Activated CD8-positive, alpha-beta memory T cell treated with anti-CD3 and anti-CD28 coated beads, Interleukin-2, amount 10 ng/mL, durations not matched to agents 7 days and 5 days (primary cell): ENCODE measurements at regions of chr19 and their contacts with region 1.

Region 1: DNA sequence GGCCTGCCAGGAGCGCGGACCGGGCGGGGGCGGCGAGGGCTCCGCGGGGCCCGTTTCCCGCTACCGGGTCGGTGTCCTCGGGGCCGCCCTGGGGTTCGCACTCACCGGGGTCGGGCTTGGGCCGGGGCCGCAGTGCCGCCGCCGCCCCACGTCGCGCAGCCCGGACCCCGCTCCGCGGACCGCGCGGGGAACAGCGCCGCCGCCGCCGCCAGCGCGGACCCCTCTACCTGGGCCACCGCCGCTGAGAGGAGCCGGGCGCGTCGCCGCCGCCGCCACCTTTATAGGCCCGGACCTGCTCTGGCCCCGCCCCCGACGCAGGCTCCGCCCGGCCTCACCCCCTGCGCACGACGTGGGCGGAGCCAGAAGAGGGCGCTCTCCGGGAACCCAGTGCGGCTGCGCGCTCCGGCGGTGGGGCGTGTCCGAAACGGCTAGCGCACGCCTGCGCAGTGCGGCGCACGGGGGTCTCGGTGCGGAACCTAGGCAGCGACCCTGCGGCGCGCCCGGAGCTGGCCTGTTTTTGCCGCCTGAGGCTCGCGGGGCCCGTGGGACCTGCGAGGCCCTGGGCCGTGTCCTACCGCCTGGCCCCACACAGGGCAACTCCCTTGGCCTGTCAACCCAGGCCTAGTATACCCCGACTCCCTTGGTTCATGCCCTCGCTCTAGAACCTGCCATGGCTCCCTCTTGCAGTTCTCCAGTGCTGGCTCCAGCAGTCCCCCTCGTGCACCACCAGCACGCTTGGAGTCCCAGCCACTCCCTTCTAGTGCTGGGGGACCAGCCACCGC is at the start of gene MKNK2:
- DNase-seq: peak; percentile 95
- ATAC-seq: peak; percentile 77
- H3K4me3 Mint-ChIP-seq: peak within 1 kb of the TSS; percentile 86
- H3K27ac Mint-ChIP-seq: peak within 1 kb of the TSS; percentile 94
- H3K4me1 Mint-ChIP-seq: peaks cover 49% of the 10 kb centered on the region
- H3K27me3 Mint-ChIP-seq: no peaks in the 10 kb centered on the region
- total RNA-seq, gene MKNK2: 196 to 201 TPM

Region 2: DNA sequence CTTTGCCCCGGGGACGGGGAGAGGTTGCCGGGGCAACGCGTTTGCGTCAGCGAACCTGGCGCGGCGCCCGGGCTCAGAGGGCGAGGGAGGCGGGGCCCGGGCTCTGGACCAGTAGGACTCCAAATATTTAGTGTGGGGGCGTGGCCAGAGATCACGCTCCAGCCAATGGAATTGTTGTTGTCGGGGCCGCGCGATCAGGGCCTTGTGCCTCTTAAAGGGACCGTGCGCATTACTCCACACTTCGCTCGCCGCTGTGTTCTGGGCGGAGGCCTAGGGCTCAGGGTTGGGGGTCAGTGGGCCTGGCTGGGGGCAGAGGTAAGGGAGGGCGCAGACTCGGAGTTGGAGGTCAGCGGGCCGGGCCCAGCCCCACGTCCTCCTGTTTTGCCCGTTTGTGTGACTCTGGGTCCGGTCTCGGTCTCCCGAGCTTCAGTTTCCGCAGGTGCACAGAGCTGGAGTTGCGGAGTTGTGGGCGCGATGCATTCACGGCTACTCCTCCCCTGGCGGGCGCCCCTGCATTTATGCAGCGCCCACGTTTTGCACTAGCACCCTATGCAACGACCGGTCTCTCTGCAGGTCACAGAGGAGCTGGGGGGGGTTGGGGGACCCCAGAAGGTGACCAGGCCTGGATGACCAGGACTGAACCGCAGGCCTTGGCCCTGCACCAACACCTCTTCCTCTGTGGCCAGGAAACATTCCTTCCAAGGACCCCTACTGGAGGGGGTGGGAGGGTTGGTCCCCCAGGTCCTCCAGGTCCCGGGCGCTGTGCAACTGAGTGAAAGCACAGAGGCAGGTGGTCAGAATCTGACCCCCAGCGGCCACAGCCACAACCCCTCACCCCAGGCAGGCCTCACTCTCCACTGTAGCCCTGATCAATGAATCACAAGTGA is 10.6 kb after region 1 on chr19:
- CTCF ChIA-PET with region 1: interaction called, 19 read pairs
- DNase-seq: peak; percentile 100
- ATAC-seq: peak; percentile 94
- H3K4me3 Mint-ChIP-seq: peak overlapping the region; percentile 84
- H3K27ac Mint-ChIP-seq: peak overlapping the region; percentile 87
- H3K4me1 Mint-ChIP-seq: peaks cover 32% of the 10 kb centered on the region
- H3K27me3 Mint-ChIP-seq: no peaks in the 10 kb centered on the region

Region 3: DNA sequence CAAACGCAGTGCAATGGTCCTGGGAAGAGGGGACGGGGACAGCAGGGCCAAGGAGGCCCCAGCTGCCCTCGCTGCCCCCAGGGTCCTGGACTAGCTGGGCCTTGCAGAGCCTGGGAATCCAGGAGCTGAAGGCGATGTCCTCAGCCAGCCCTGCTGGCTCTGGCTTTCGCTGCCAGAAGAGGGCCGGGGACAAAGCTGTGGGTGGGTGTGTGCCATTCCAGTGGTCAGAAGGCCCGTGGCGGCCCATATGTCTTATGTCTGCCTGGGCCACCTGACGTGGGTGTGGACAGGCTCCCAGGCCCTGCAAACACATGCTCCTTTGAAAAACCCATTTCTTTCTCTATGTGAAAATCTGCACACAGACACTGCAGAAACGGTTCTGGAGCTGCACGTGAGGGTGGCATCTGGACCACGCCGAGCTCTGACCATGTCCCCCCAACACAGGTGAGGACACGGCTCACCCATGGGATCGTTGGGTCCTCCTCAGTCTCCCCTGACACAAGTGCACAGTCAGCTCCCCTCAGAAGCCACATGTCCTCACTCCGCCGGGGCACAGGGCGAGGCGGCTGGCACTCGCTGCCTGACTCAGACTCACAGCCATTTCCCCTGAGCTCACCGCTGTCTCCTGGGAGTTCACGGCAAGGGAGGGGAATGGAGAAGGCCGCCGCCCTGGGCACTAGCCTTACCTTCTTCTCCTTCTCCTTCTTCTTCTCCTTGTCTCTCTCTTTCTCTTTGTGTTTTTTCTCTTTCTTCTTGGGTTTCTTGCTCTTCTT is 62.4 kb after region 1 on chr19:
- CTCF ChIA-PET with region 1: no interaction called
- DNase-seq: no peak
- ATAC-seq: no peak
- H3K4me3 Mint-ChIP-seq: no peak overlapping the region
- H3K27ac Mint-ChIP-seq: no peak overlapping the region
- H3K4me1 Mint-ChIP-seq: peaks cover 5% of the 10 kb centered on the region
- H3K27me3 Mint-ChIP-seq: no peaks in the 10 kb centered on the region